Activated CD4-positive, alpha-beta T cell treated with anti-CD3 and anti-CD28 coated beads, Interleukin-2, amount 10 ng/mL, durations not matched to agents 24 days and 14 days (primary cell): ENCODE measurements at regions of chr4 and their contacts with region 1.

Region 1: GRCh38 chr4:83110223-83110945 is 4.1 kb downstream of the PLAC8 start:
- DNase-seq: peak; percentile 97
- H3K4me3 Mint-ChIP-seq: peak overlapping the region; percentile 89
- H3K27ac Mint-ChIP-seq: peak overlapping the region; percentile 95
- H3K4me1 Mint-ChIP-seq: peaks cover 53% of the 10 kb centered on the region
- H3K27me3 Mint-ChIP-seq: no peaks in the 10 kb centered on the region

Region 2: DNA sequence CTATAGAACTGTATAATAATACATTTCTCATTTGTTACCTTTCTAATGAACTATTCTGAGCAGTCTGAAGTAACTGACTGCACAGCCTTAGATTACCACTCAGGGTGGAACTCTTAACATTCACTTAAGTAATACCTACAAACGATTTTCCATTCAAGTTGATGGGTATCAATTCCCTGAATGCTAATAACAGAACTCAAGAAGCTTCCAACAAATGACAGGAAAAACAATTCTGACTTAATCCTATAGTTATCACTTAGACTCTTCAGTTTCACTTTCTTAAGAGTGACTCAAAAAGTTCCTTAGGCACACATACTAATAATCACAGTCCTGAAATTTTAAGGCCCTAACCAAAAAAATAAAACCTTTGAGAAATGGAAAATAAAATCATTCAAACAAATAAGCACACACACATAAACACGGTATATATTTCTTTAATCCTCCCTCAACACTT is 757.4 kb before region 1 on chr4:
- intact Hi-C with region 1: no loop called
- DNase-seq: no peak
- H3K4me3 Mint-ChIP-seq: peak overlapping the region; percentile 28
- H3K27ac Mint-ChIP-seq: peak overlapping the region; percentile 90
- H3K4me1 Mint-ChIP-seq: peaks cover 40% of the 10 kb centered on the region
- H3K27me3 Mint-ChIP-seq: no peaks in the 10 kb centered on the region

Region 3: DNA sequence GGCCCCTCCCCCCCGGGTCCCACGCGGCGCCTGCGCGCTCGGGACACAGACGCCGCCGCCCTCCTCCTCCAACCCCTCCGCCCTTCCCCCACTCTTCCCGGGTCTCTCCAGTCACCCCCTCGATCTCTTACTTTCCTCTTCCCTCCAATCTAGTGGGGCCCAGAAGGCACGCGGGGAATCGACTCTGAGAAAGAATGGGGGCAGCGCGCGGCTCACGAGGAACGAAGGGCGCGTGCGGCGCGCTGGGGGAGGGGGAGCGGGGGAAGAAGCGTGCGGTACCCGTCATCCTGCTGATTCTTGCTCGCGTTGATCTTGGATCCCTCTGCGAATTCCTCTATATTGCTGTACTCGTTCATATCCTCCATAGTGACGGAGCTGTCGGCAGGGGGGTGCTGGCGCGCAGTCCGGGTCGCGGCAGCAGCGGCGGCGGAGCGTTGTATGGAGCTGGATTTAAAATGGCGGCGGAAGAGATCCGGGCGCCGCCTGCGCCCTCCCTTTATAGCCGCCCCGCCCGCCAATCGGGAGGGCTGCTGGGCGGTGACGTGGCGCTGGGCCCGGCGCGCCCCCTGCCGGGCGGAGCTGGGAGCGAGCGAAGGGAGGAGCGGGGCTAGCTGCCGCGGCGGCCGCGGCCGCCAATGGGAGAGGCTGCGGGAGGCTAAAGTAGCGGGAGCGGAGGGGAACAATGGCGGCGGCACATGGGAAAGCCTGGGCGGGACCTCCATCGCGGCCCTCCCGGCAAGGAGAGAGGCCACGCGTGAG is 681.2 kb before region 1 on chr4:
- intact Hi-C with region 1: loop called (anchors 2 kb)
- DNase-seq: peak; percentile 98
- H3K4me3 Mint-ChIP-seq: peak overlapping the region; percentile 96
- H3K27ac Mint-ChIP-seq: peak overlapping the region; percentile 99
- H3K4me1 Mint-ChIP-seq: peaks cover 61% of the 10 kb centered on the region
- H3K27me3 Mint-ChIP-seq: no peaks in the 10 kb centered on the region

Region 4: DNA sequence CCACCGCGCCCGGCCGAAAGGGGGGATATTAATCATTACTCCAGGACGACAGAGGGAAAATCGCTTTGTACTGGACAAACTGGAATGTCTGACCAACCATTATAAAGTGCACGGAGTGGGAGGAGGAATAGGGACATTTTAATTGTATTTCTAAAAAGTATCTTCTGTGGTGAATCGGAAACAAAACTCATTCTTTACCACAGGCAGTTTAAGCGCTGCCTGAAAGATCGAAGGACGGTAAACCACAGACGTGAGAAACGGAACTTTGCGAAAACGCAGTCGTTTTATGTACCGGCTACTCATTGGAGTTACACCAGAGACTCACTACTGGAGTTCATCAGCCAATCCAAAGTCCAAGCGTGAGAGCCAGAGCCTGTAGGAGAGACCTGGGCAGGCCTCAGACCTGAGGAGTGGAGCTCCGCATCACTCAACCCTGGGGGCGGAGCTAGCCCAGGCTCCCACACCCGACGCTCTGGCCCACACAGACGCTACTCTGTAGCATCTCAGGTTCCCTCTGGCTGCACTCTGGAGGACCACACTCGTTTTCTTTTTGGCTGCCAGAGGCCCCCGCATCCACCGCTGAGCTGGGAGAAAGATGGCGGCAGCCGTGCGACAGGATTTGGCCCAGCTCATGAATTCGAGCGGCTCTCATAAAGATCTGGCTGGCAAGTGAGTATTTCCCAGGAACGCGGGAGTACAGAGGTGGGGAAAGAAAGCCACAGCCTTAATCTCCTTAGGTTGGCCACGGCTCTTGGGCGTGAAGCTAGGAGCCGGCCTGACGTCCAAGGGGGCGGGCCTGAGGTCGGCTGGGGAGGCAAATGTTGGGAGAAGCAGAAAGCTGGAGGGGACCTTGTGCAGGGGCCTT is 75.5 kb before region 1 on chr4 and contains the start of gene COPS4:
- intact Hi-C with region 1: loop called (anchors 2 kb)
- DNase-seq: peak; percentile 98
- H3K4me3 Mint-ChIP-seq: peak within 1 kb of the TSS; percentile 90
- H3K27ac Mint-ChIP-seq: peak within 1 kb of the TSS; percentile 98
- H3K4me1 Mint-ChIP-seq: peaks cover 16% of the 10 kb centered on the region
- H3K27me3 Mint-ChIP-seq: peaks cover 6% of the 10 kb centered on the region
- total RNA-seq, gene COPS4: 36.5 and 37.5 TPM in 2 replicates

Region 5: GRCh38 chr4:83125738-83126141 is 15.4 kb after region 1 on chr4:
- intact Hi-C with region 1: loop called (anchors 1 kb)
- DNase-seq: peak; percentile 81
- H3K4me3 Mint-ChIP-seq: peak overlapping the region; percentile 63
- H3K27ac Mint-ChIP-seq: peak overlapping the region; percentile 40
- H3K4me1 Mint-ChIP-seq: peaks cover 19% of the 10 kb centered on the region
- H3K27me3 Mint-ChIP-seq: peaks cover 9% of the 10 kb centered on the region

Region 6: DNA sequence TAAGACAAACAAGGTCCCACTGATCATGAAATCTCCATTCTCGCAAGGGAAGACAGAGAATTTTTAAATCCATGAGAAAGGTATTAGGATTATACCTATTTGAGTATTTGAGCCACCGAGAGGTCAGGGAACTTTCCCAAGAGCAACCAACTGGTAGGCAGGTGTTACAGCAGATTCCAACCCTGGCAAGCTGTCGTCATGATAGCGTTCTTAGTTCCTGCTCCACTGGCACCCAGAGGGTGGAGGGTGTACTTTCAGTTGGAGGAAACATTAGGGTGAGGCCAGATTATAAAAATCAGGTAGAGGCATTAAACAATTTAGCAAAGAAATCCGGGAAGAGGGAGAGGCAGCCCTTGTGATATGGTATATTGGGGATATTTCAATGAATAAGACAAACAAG is 150.9 kb after region 1 on chr4:
- intact Hi-C with region 1: loop called (anchors 2 kb)
- DNase-seq: no peak
- H3K4me3 Mint-ChIP-seq: no peak overlapping the region
- H3K27ac Mint-ChIP-seq: no peak overlapping the region
- H3K4me1 Mint-ChIP-seq: peaks cover 13% of the 10 kb centered on the region
- H3K27me3 Mint-ChIP-seq: no peaks in the 10 kb centered on the region

Region 7: GRCh38 chr4:83356899-83357661 is 246.7 kb after region 1 on chr4:
- intact Hi-C with region 1: loop called (anchors 2 kb)
- DNase-seq: no peak
- H3K4me3 Mint-ChIP-seq: peak overlapping the region; percentile 22
- H3K27ac Mint-ChIP-seq: peak overlapping the region; percentile 96
- H3K4me1 Mint-ChIP-seq: peaks cover 15% of the 10 kb centered on the region
- H3K27me3 Mint-ChIP-seq: no peaks in the 10 kb centered on the region